Sciatic nerve (tissue), 2 donors: ENCODE measurements at regions of chr1 and their contacts with region 1.

Region 1: DNA sequence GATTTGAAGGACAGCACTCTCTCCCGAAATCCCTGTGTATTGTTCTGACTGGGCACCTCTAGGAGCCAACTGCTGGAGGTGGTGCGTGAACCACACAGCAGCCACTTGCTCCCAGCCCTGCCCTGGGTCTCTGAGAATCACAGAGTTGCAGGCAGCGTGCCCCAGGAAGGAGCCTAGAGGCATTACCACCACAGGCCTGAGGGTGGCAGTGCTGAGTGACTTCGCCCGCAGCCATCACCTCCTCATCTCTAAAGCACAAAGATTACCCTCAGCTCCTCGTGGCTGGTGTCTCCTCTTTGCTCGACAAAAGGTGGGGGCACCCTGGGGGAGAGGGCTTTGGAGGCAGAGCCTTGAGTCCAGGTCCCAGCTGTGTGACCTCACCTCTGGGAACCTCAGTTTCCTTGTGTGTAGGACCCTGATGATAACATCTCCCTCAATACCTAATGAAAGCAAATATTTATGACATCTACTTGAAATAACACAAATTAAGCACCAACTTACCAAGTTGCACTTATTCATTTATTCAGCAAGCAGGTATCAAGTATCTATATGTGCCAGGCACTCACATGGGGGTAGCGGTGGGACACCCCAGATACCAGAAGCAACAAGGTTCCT is 86.3 kb downstream of the VWA5B1 start:
- DNase-seq: no peak
- ATAC-seq: no peak

Region 2: GRCh38 chr1:20279509-20279908 is 97.5 kb before region 1 on chr1:
- intact Hi-C with region 1: no loop called
- DNase-seq: no peak
- ATAC-seq: no peak

Region 3: DNA sequence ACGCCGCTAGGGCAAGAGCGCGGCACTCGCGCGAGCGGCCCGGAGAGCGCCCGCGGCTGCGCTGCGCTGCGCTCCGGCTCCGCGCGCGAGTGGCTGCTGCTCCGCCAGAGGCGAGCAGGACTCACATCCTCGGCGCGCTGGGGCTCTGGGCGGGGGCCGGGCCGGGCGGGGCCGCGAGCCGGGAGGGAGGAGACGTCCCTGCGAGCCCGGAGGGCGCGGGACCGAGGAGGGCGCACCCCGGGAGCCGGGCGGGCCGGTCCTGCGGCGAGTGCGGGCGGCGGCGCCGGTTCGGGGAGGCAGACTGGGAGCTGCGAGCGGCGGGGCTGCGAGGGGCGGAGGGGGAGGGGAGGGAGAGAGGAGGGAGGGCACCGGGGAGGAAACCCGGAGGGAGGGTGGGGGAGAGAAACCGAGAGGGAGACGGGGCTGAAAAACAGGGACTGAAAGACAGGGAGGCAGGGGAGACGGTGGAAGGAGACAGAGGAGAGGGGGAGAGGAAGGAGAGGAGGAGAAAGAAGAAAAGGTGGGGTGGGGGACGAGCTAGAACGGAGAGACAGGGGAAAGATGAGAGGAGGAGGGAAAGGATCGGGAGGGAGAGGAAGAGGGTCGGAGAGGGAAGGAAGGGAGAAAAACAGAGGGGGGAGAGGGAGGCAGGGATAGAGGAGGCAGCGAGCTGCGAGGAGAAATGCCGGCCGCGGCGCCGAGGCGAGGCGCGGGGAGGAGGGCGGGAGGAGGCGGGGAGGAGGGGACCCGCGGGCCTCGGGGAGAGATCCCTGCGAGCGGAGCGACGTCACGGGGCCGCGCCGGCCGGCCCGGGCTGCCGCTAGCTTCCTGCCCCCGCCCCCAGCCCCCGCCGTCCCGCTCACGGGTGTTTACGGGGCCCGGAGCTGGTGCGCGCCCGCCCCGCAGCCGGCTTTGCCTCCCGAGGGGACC is 108.8 kb after region 1 on chr1 and contains the start of gene CAMK2N1:
- intact Hi-C with region 1: loop called (anchors 10 kb)
- DNase-seq: peak; percentile 81
- ATAC-seq: peak; percentile 85
- total RNA-seq, gene CAMK2N1: 8.2 TPM